Activated T-helper 1 cell treated with anti-CD3 and anti-CD28 coated beads, Interleukin-12 subunit alpha, Interleukin-12 subunit beta, Interleukin-2, Interleukin-4 antibody, amounts not matched to agents 30 ng/mL and 10 ng/mL and 1 ng/mL, durations not matched to agents 14 hours and 24 hours and 36 hours (primary cell): ENCODE measurements at regions of chr3 and their contacts with region 1.

Region 1: DNA sequence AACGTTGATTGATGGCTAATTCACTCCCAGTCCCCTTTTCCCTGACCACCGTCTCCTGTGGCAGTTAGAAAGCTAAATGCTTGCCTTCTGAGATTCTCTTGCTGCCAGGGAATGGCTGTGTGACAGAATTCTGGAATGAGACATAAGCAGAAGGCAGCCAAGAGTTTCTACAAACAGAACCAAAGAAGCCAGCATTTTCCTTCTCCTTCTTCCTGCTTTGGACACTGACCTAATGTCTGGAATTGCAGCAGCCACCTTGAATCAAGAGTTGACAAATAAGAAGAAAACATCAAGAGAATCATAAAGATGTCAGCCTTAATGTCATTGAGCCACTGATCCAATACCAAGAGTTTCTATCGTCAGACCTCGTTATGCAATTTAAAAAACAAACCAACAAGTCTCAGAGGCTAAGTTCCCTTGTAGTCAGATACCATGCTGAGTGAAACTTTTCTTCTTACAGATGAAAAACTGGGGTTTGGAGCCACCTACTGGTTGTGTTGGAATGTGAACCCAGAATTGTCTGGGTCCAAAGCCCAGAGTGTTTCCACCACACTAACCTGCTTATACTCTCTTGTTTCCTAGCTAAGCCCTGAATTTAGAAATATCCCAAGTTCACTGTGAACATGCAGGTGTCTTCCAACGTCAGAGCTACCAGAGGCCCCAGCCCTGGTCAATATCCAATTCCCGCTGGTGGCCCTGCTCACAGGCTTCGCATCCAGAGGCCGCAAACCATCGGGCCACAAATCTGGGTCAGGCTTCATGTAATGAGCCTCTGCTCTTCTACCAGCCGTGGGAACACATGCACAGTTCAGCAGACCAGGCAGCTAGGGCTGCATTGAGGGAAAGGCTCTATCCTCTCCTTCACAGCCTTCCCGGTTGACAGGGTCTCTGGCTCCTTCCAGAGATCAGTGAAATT is 42.5 kb downstream of the MCF2L2 start:
- DNase-seq: peak; percentile 40
- H3K4me3 Mint-ChIP-seq: no peak overlapping the region
- H3K27ac Mint-ChIP-seq: no peak overlapping the region
- H3K4me1 Mint-ChIP-seq: peaks cover 11% of the 10 kb centered on the region
- H3K27me3 Mint-ChIP-seq: no peaks in the 10 kb centered on the region

Region 2: GRCh38 chr3:182713743-182714517 is 672.0 kb before region 1 on chr3:
- intact Hi-C with region 1: loop called (anchors 1 kb)
- DNase-seq: no peak
- H3K4me3 Mint-ChIP-seq: no peak overlapping the region
- H3K27ac Mint-ChIP-seq: no peak overlapping the region
- H3K4me1 Mint-ChIP-seq: peaks cover 19% of the 10 kb centered on the region
- H3K27me3 Mint-ChIP-seq: peaks cover 9% of the 10 kb centered on the region

Region 3: GRCh38 chr3:182909318-182910040 is 476.5 kb before region 1 on chr3:
- intact Hi-C with region 1: loop called (anchors 5 kb)
- DNase-seq: no peak
- H3K4me3 Mint-ChIP-seq: no peak overlapping the region
- H3K27ac Mint-ChIP-seq: no peak overlapping the region
- H3K4me1 Mint-ChIP-seq: peaks cover 43% of the 10 kb centered on the region
- H3K27me3 Mint-ChIP-seq: no peaks in the 10 kb centered on the region

Region 4: DNA sequence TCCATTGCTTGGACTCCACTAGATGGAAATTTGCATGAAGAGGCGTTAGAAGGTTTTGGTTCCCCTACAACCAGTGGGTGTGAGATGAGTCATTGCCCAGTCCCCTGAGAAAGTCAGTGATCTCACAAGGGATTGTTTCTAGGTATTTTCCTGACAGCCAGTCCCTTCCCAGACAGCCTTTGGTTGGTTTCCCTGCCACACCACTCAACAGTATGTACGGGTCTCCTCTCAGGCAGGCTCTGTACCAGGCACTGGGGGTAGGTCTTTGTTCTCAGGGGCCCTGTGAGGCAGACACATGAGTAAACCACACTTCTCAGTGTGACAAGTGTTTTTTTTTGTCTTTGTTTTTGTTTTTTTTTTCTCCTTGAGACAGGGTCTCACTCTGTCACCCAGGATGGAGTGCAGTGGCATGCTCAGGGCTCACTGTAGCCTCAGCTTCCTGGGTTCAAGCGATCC is 227.4 kb before region 1 on chr3:
- intact Hi-C with region 1: loop called (anchors 1 kb)
- DNase-seq: peak; percentile 33
- H3K4me3 Mint-ChIP-seq: peak overlapping the region; percentile 45
- H3K27ac Mint-ChIP-seq: peak overlapping the region; percentile 73
- H3K4me1 Mint-ChIP-seq: peaks cover 48% of the 10 kb centered on the region
- H3K27me3 Mint-ChIP-seq: no peaks in the 10 kb centered on the region

Region 5: GRCh38 chr3:183178629-183179549 is 207.1 kb before region 1 on chr3:
- intact Hi-C with region 1: loop called (anchors 1 kb)
- DNase-seq: peak; percentile 17
- H3K4me3 Mint-ChIP-seq: peak overlapping the region; percentile 79
- H3K27ac Mint-ChIP-seq: peak overlapping the region; percentile 18
- H3K4me1 Mint-ChIP-seq: peaks cover 17% of the 10 kb centered on the region
- H3K27me3 Mint-ChIP-seq: peaks cover 36% of the 10 kb centered on the region

Region 6: GRCh38 chr3:183265834-183266417 is 120.0 kb before region 1 on chr3:
- intact Hi-C with region 1: loop called (anchors 5 kb)
- DNase-seq: peak; percentile 7
- H3K4me3 Mint-ChIP-seq: peak overlapping the region; percentile 25
- H3K27ac Mint-ChIP-seq: no peak overlapping the region
- H3K4me1 Mint-ChIP-seq: peaks cover 15% of the 10 kb centered on the region
- H3K27me3 Mint-ChIP-seq: no peaks in the 10 kb centered on the region

Region 7: GRCh38 chr3:183766745-183767606 is 381.0 kb after region 1 on chr3:
- intact Hi-C with region 1: loop called (anchors 1 kb)
- DNase-seq: peak; percentile 63
- H3K4me3 Mint-ChIP-seq: no peak overlapping the region
- H3K27ac Mint-ChIP-seq: no peak overlapping the region
- H3K4me1 Mint-ChIP-seq: peaks cover 7% of the 10 kb centered on the region
- H3K27me3 Mint-ChIP-seq: no peaks in the 10 kb centered on the region